Activated B cell treated with CpG ODN at 0.5 μM for 24 hours (primary cell): ENCODE measurements at regions of chr2 and their contacts with region 1.

Region 1: GRCh38 chr2:64644177-64645004 is 9.3 kb downstream of the SERTAD2 start:
- DNase-seq: peak; percentile 48
- ATAC-seq: peak; percentile 45
- H3K4me3 Mint-ChIP-seq: peak overlapping the region; percentile 86
- H3K27ac Mint-ChIP-seq: peak overlapping the region; percentile 93
- H3K4me1 Mint-ChIP-seq: peaks cover 96% of the 10 kb centered on the region
- H3K27me3 Mint-ChIP-seq: no peaks in the 10 kb centered on the region
- CTCF ChIP-seq: no peak

Region 2: DNA sequence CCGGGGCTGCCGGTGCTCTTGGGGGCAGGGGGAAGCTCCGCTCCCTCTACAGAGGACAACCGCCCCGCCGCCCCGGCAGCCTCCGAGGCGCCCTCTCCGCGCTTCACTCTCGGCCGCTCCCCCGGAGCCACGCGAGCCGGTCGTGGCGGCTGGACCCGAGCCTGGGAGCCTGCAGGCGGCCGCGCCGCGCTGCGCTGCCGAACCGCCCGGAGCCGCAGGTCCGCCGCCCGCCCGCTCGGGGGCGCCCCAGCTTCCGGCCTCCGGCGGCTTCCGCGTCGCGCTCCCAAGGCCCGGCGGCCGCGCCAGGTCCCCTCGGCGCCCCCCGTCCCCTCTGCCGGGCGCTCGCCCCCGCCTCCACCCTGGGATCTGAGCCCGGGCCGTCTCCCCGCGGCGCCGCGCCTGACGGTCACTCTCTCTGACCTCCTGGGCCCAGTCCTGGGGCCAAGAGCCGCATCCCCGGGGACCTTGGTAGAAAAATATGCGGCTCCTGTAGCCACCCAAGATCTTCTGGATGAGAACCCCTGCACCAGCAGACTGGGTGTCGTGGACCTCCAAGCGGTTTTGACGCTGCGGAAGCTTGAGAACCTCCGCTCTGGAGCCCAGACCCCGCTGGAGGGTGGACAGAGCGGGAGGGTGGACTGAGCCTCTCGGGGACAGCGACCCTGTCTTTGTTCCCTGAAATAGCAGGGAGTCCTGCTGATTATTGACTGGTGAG is 35.0 kb before region 1 on chr2:
- CTCF ChIA-PET with region 1: interaction called, 24 read pairs
- POLR2A ChIA-PET with region 1: interaction called, 58 read pairs
- intact Hi-C with region 1: loop called (anchors 1 kb)
- DNase-seq: peak; percentile 82
- ATAC-seq: peak; percentile 71
- H3K4me3 Mint-ChIP-seq: peak overlapping the region; percentile 84
- H3K27ac Mint-ChIP-seq: peak overlapping the region; percentile 77
- H3K4me1 Mint-ChIP-seq: peaks cover 34% of the 10 kb centered on the region
- H3K27me3 Mint-ChIP-seq: no peaks in the 10 kb centered on the region
- CTCF ChIP-seq: no peak

Region 3: DNA sequence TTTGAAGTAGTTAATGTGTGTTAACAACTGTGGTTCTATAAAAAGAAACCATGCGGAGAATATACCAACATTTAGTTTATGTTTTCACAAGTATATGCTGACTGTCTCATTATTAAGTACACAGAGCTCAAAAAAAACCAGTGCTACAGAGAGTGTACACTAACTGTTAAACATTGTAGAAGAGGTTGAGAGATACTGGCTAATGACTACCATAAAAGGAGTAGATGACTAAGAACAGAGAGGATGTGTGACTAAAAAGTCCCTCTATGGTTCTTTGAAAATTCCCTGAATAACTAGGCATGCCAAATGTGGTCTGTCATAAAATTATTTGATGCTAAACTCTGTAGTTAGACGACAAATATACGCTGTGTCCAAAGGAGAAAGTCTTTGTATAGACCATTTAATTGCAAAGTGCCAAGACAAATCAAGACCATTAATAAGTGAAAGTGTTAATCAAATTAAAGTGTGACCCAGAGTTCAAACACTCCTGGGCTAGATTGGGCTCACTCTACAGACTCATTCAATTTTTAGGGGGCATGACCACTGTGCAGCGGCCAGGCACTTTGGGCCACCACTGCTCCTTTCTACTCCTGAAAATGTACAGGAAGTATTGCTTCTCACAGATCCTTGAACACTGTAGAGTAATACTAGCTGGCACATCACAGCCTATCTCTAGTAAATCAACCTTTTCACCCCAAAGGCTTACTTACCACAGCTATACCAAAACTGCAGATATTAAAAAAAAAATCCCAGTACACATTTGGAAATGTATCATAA is 54.5 kb after region 1 on chr2:
- CTCF ChIA-PET with region 1: interaction called, 7 read pairs
- POLR2A ChIA-PET with region 1: interaction called, 5 read pairs
- intact Hi-C with region 1: loop called (anchors 1 kb)
- DNase-seq: no peak
- ATAC-seq: peak; percentile 86
- H3K4me3 Mint-ChIP-seq: peak overlapping the region; percentile 52
- H3K27ac Mint-ChIP-seq: peak overlapping the region; percentile 89
- H3K4me1 Mint-ChIP-seq: peaks cover 51% of the 10 kb centered on the region
- H3K27me3 Mint-ChIP-seq: no peaks in the 10 kb centered on the region
- CTCF ChIP-seq: no peak

Region 4: GRCh38 chr2:64831134-64831976 is 187.0 kb after region 1 on chr2:
- CTCF ChIA-PET with region 1: interaction called, 11 read pairs
- POLR2A ChIA-PET with region 1: interaction called, 66 read pairs
- intact Hi-C with region 1: loop called (anchors 1 kb)
- DNase-seq: peak; percentile 75
- ATAC-seq: peak; percentile 96
- H3K4me3 Mint-ChIP-seq: peak overlapping the region; percentile 63
- H3K27ac Mint-ChIP-seq: peak overlapping the region; percentile 82
- H3K4me1 Mint-ChIP-seq: peaks cover 21% of the 10 kb centered on the region
- H3K27me3 Mint-ChIP-seq: no peaks in the 10 kb centered on the region
- CTCF ChIP-seq: no peak

Region 5: GRCh38 chr2:64865073-64865830 is 220.9 kb after region 1 on chr2:
- CTCF ChIA-PET with region 1: interaction called, 25 read pairs
- POLR2A ChIA-PET with region 1: interaction called, 276 read pairs
- intact Hi-C with region 1: loop called (anchors 1 kb)
- DNase-seq: peak; percentile 76
- ATAC-seq: peak; percentile 56
- H3K4me3 Mint-ChIP-seq: peak overlapping the region; percentile 41
- H3K27ac Mint-ChIP-seq: no peak overlapping the region
- H3K4me1 Mint-ChIP-seq: peaks cover 6% of the 10 kb centered on the region
- H3K27me3 Mint-ChIP-seq: no peaks in the 10 kb centered on the region
- CTCF ChIP-seq: no peak